ENCODE measurements at regions of chr12 and their contacts with region 1.

Region 1: GRCh38 chr12:42023733-42024494 is 120.8 kb downstream of the GXYLT1 start:
- DNase-seq: peak; percentile 73
- ATAC-seq: peak; percentile 88 to 92
- H3K4me3 ChIP-seq: peak overlapping the region; percentile 37
- H3K27ac ChIP-seq: no peak overlapping the region
- H3K4me1 ChIP-seq: no peaks in the 10 kb centered on the region
- H3K27me3 ChIP-seq: no peaks in the 10 kb centered on the region
- CTCF ChIP-seq: peak; percentile 96

Region 2: DNA sequence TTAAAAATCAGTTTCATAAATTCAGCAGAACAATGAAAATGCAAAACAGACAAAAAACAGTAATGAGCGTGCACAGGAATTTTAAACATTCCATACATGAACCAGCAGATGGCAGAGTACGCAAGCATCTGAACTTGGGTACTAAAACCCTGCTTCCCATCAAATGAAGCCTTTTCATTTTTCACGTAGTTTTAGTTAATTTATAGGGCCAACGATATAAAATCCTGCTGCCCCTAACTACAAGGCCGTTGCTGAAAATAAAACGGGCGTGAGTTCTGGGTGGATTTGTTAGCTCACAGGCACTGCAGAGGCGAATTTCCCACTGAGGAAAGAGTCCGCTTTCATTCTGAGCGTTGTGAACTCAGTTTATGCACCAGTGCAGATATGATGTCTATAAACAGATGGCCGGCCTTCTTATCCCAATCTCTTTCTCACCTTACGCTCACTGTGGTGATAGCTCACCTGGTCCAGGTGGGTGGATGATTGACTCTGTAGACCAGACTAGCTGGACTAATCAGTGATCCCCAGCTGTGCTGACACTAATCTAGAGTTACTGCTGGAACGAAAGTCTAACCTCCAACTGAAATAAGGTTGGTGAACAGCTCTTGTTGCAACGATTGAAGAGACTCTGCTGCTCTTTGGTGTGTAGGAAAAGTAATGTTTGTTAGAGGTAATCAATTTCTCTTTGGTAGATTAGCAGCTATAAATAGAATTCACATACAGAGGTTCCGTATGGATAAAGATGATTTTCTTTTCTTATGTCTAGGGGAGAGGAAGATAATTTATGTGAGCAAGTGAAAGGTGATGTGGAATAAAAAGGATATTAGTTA is 746.6 kb before region 1 on chr12:
- intact Hi-C with region 1: loop called (anchors 5 kb)
- DNase-seq: no peak
- ATAC-seq: peak in 1 of 2 donors; percentile 51
- H3K4me3 ChIP-seq: no peak overlapping the region
- H3K27ac ChIP-seq: no peak overlapping the region
- H3K4me1 ChIP-seq: no peaks in the 10 kb centered on the region
- H3K27me3 ChIP-seq: no peaks in the 10 kb centered on the region
- CTCF ChIP-seq: peak; percentile 64

Measured in lower lobe of right lung (tissue), 2 donors.